Astrocyte of the cerebellum (primary cell): ENCODE measurements at regions of chr1 and their contacts with region 1.

Region 1: GRCh38 chr1:206030714-206031113 is 7.0 kb upstream of the CTSE start:
- DNase-seq: peak; percentile 40
- H3K4me3 ChIP-seq: no peak overlapping the region
- CTCF ChIP-seq: peak; percentile 98

Region 2: GRCh38 chr1:206106328-206107167 is 75.8 kb after region 1 on chr1:
- in situ Hi-C with region 1: loop called (anchors 5 kb)
- DNase-seq: peak; percentile 63
- H3K4me3 ChIP-seq: no peak overlapping the region
- CTCF ChIP-seq: peak; percentile 90